H1 (cell line): ENCODE measurements at regions of chr1 and their contacts with region 1.

Region 1: DNA sequence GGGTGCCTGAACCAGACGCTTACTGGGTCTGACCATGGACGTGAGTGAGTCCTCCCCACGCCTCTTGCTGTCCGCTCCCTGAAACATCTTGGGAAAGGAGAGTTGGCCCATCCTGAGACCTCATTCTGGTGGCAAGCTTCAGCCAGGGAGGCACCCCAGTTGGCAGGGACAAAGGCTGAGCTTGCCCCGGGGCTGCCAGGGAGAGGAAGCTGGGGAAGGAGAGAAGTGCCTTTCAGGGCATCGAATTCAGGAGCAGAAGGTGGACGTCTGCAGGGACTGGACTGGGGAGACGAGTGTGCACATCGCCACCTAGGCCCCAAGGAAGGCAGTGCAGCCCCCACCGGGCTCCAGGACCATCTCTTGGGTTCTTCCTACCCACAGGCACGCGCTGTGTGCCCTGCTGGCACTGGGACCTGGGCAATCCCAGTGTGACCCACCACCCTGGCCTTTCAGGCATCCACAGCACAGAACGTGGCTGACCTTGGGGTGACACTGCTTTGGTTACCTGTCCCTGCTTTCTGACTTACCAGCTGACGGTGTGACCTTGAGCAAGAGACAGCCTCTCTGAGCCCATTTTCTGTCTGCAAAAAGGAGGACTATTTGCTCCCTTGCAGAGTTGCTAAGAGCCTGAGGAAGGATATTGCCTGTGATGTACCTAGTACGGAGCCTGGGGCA is 133.0 kb upstream of the WNT4 start:
- DNase-seq: peak; percentile 44 to 93
- H3K4me3 ChIP-seq: no peak overlapping the region
- H3K27ac ChIP-seq: no peak overlapping the region
- H3K4me1 ChIP-seq: peaks cover 2 to 15% (median 9%) of the 10 kb centered on the region in 4 experiments
- H3K27me3 ChIP-seq: peaks cover 0 to 3% (median 0%) of the 10 kb centered on the region in 4 experiments; a peak in 3 of 7 replicates
- CTCF ChIP-seq: peak; percentile 81 to 98 (median 95)
- EP300 ChIP-seq: no peak
- POLR2A ChIP-seq: no peak
- RAD21 ChIP-seq: peak; percentile 84 to 87

Region 2: DNA sequence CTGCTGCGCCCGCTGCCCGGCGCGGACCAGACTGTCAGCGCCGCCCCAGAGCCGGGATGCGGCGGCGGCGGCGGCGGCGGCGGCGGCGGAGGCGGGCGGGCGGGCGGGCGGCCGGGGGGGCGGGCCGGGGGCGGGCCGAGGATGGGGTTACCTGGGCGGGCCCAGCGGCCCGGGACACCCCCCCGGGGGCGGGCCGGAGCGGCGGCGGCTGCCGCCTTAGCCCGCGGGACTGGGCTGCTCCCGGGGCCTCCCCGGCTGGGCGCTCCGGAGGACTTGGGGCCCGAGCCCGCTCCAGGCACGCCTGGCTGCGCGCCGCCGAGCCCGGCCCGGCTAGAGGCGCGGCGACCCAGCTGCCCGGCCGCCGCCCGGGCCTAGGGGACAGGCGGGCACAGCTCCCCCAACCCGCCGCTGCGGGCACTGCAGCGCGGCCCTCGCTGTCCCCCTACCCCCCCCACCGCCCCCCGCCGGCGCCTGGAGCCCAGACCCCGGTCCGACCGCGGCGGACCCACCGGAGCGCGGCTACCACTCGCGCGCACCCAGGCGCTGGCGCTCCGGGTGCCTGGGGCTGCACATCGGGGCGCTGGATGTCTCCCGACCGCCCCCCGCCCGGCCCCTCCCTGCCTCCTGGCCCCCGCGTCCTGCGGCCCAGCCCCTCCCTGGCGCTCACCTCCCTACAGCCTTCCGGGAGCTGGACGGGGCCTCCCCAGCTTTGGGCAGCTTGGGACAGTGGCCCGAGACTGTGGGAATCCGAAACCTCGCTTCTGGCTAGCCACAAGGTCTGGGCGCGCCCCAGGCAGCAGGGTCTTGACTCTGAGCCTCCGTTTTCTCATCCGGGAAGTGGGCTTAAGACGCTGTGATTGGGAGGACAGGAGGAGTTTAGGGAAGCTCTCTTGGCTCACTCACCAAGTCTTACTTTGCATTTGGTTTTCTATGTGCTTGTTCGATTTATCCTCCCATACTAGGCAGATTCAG is 132.5 kb before region 1 on chr1 and contains the start of gene WNT4:
- CTCF ChIA-PET with region 1: interaction called, 16 read pairs
- POLR2A ChIA-PET with region 1: no interaction called
- DNase-seq: peak in 1 of 2 experiments; percentile 74
- H3K4me3 ChIP-seq: peak within 1 kb of the TSS; percentile 46 to 73 (median 52)
- H3K27ac ChIP-seq: no peak within 1 kb of the TSS
- H3K4me1 ChIP-seq: peaks cover 5 to 23% (median 10%) of the 10 kb centered on the region in 4 experiments
- H3K27me3 ChIP-seq: peaks cover 4 to 40% (median 26%) of the 10 kb centered on the region in 4 experiments
- CTCF ChIP-seq: peak in 2 of 3 experiments; percentile 19 to 50; a peak in 3 of 4 replicates
- EP300 ChIP-seq: no peak
- POLR2A ChIP-seq: no peak
- RAD21 ChIP-seq: peak in 1 of 2 experiments; percentile 46; a peak in 2 of 4 replicates
- total RNA-seq, gene WNT4: 1.3 and 1.4 TPM in 2 replicates

Region 3: GRCh38 chr1:22212400-22213233 is 63.2 kb before region 1 on chr1:
- CTCF ChIA-PET with region 1: interaction called, 10 read pairs
- POLR2A ChIA-PET with region 1: no interaction called
- DNase-seq: no peak
- H3K4me3 ChIP-seq: no peak overlapping the region
- H3K27ac ChIP-seq: no peak overlapping the region
- H3K4me1 ChIP-seq: peaks cover 12 to 27% (median 15%) of the 10 kb centered on the region in 4 experiments
- H3K27me3 ChIP-seq: peaks cover 0 to 15% (median 3%) of the 10 kb centered on the region in 4 experiments; a peak in 5 of 7 replicates
- CTCF ChIP-seq: no peak
- EP300 ChIP-seq: no peak
- POLR2A ChIP-seq: no peak
- RAD21 ChIP-seq: no peak

Region 4: GRCh38 chr1:22229374-22229773 is 46.5 kb before region 1 on chr1:
- CTCF ChIA-PET with region 1: interaction called, 12 read pairs
- POLR2A ChIA-PET with region 1: no interaction called
- DNase-seq: no peak
- H3K4me3 ChIP-seq: no peak overlapping the region
- H3K27ac ChIP-seq: no peak overlapping the region
- H3K4me1 ChIP-seq: peaks cover 11 to 27% (median 19%) of the 10 kb centered on the region in 4 experiments
- H3K27me3 ChIP-seq: no peaks in the 10 kb centered on the region; a peak in 1 of 7 replicates
- CTCF ChIP-seq: no peak
- EP300 ChIP-seq: no peak
- POLR2A ChIP-seq: no peak
- RAD21 ChIP-seq: no peak

Region 5: DNA sequence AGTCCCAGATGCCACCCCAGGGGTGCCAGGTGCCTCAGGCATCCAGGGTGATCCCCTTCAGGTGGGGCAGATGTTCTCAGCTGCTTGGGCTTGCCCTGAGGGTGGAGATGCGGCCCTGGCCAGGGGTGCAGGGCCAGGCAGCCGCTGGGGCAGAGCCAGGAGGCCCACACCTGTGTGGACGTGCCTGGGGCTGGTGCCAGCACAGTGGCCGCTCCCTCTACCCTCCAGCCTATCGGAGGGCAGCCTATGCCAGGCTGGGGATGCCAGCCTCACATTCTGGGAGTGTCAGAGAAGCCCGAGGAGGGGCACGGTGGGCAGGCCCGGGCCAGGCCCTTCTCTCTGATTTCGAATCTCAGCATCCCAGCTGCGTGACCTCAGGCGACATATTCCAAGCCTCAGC is 36.5 kb before region 1 on chr1:
- CTCF ChIA-PET with region 1: interaction called, 17 read pairs
- POLR2A ChIA-PET with region 1: no interaction called
- DNase-seq: no peak
- H3K4me3 ChIP-seq: no peak overlapping the region
- H3K27ac ChIP-seq: no peak overlapping the region; the same call in 1 of the 2 replicates
- H3K4me1 ChIP-seq: peaks cover 4 to 11% (median 5%) of the 10 kb centered on the region in 4 experiments
- H3K27me3 ChIP-seq: no peaks in the 10 kb centered on the region; a peak in 1 of 7 replicates
- CTCF ChIP-seq: no peak
- EP300 ChIP-seq: no peak
- POLR2A ChIP-seq: no peak
- RAD21 ChIP-seq: no peak

Region 6: DNA sequence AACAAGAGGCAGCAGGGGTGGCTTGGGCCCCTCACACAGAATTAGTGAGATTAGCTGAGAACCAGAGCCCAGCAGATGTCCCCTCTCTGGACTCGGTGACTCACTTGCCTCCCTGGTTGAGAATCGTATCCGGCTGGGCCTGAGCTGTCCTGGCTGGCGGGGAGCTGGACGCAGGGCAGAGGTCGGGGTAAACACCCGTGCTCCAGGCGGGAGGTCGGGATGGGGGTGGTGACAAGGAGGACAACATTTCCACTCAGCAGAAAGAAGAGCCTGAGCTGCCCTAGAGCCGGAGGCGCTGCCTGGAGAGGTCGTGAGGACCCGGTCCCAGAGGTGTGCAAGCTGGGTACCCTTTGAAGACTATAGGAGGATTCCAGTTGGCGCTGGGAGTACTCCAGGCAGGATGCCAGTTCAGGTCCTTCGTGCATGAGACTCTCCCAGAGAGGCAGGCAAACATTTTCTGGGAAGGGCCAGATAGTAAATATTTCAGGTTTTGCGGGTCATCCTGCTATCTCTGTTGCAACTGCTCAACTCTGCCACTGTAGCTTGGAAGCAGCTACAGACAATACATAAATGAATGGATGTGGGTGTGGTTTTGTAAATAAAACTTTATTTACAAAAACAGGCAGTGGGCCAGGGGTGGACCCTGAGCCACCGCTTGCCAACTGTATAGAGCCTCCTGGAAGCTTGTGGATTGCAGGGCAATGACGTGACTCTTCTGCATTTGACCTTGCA is 16.1 kb before region 1 on chr1:
- CTCF ChIA-PET with region 1: interaction called, 13 read pairs
- POLR2A ChIA-PET with region 1: interaction called, 4 read pairs
- DNase-seq: no peak
- H3K4me3 ChIP-seq: no peak overlapping the region
- H3K27ac ChIP-seq: no peak overlapping the region
- H3K4me1 ChIP-seq: peaks cover 10 to 27% (median 17%) of the 10 kb centered on the region in 4 experiments
- H3K27me3 ChIP-seq: no peaks in the 10 kb centered on the region
- CTCF ChIP-seq: no peak
- EP300 ChIP-seq: no peak
- POLR2A ChIP-seq: no peak
- RAD21 ChIP-seq: no peak